GM12878 (cell line): ENCODE measurements at regions of chr3 and their contacts with region 1.

Region 1: GRCh38 chr3:197801891-197802778 is 11.1 kb downstream of the LRCH3 start:
- DNase-seq: peak; percentile 40
- ATAC-seq: peak; percentile 68
- H3K4me3 ChIP-seq: peak overlapping the region; percentile 24; the same call in 1 of the 2 replicates
- H3K27ac ChIP-seq: peak overlapping the region; percentile 54
- H3K4me1 ChIP-seq: peaks cover 37% of the 10 kb centered on the region
- H3K27me3 ChIP-seq: no peaks in the 10 kb centered on the region
- CTCF ChIP-seq: peak; percentile 49 to 56 (median 51)
- EP300 ChIP-seq: no peak
- POLR2A ChIP-seq: no peak
- RAD21 ChIP-seq: peak; percentile 46

Region 2: GRCh38 chr3:197749601-197750395 is 52.3 kb before region 1 on chr3 and contains the start of gene FYTTD1:
- CTCF ChIA-PET with region 1: interaction called, 11 read pairs
- POLR2A ChIA-PET with region 1: interaction called, 10 read pairs
- RAD21 ChIA-PET with region 1: interaction called, 7 read pairs
- SMC1A ChIA-PET with region 1: interaction called, 7 read pairs
- in situ Hi-C with region 1: no loop called
- intact Hi-C with region 1: loop called (anchors 1 kb)
- DNase-seq: no peak
- ATAC-seq: peak; percentile 87
- H3K4me3 ChIP-seq: peak within 1 kb of the TSS; percentile 82
- H3K27ac ChIP-seq: peak within 1 kb of the TSS; percentile 84
- H3K4me1 ChIP-seq: peaks cover 19% of the 10 kb centered on the region
- H3K27me3 ChIP-seq: no peaks in the 10 kb centered on the region
- CTCF ChIP-seq: peak; percentile 47 to 63 (median 50); a peak in 5 of 6 replicates
- EP300 ChIP-seq: 0 out of 4 replicates have a peak, but pooled peaks of 1 of the 2 experiments have one; percentile 9
- POLR2A ChIP-seq: peak; percentile 75
- RAD21 ChIP-seq: peak; percentile 49
- polyA plus RNA-seq, gene FYTTD1: 25.5 to 35.5 TPM

Region 3: DNA sequence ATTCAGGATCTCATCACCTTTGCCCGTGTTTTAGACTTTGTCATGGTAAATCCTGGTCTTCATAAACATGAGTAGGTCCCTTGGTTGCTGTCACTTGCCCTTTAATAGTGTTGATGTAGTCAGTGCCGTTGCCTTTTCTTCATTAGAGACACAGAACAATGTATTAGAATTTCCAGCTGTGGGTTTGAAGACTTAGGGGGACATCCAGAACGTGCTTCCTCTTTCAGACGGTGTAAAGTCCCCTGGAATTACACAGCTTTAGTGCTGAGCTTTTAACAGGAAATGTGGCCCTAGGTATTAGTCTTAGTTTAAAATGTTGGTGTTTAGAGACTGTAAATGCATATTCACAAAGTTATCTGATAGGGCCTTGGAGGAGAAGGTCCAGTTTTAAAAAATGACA is 19.9 kb before region 1 on chr3:
- CTCF ChIA-PET with region 1: interaction called, 32 read pairs
- POLR2A ChIA-PET with region 1: interaction called, 13 read pairs
- RAD21 ChIA-PET with region 1: interaction called, 34 read pairs
- SMC1A ChIA-PET with region 1: interaction called, 19 read pairs
- in situ Hi-C with region 1: no loop called
- intact Hi-C with region 1: no loop called
- DNase-seq: peak; percentile 50
- ATAC-seq: peak; percentile 89
- H3K4me3 ChIP-seq: no peak overlapping the region
- H3K27ac ChIP-seq: peak overlapping the region; percentile 81
- H3K4me1 ChIP-seq: peaks cover 25% of the 10 kb centered on the region
- H3K27me3 ChIP-seq: no peaks in the 10 kb centered on the region
- CTCF ChIP-seq: no peak
- EP300 ChIP-seq: no peak
- POLR2A ChIP-seq: no peak
- RAD21 ChIP-seq: no peak

Region 4: GRCh38 chr3:197970588-197970987 is 168.5 kb after region 1 on chr3:
- CTCF ChIA-PET with region 1: no interaction called
- POLR2A ChIA-PET with region 1: no interaction called
- RAD21 ChIA-PET with region 1: no interaction called
- SMC1A ChIA-PET with region 1: no interaction called
- in situ Hi-C with region 1: no loop called
- intact Hi-C with region 1: no loop called
- DNase-seq: no peak
- ATAC-seq: no peak
- H3K4me3 ChIP-seq: no peak overlapping the region
- H3K27ac ChIP-seq: no peak overlapping the region
- H3K4me1 ChIP-seq: no peaks in the 10 kb centered on the region
- H3K27me3 ChIP-seq: no peaks in the 10 kb centered on the region
- CTCF ChIP-seq: no peak
- EP300 ChIP-seq: no peak
- POLR2A ChIP-seq: no peak
- RAD21 ChIP-seq: no peak